Panc1 (cell line): ENCODE measurements at regions of chr2 and their contacts with region 1.

Region 1: DNA sequence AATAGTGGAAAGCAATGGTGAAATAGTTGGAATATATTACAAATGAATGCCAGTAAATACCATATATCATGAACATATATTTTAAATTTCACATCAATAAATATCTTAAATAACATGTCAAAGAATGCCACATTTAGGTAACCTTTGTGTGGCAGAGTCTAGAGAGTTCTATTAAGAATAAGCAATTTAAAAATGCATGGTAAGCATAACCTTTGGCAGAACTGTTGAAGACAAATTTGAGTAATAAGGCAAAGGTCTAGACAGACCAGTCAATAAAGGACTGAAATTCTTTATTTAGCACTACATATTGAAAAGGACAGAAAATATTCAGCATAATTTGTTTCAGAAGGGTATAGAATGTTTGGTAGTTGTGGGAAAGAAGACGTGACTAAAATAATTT is 1417.0 kb downstream of the SUCLG1 start:
- DNase-seq: no peak
- ATAC-seq: no peak
- H3K4me3 ChIP-seq: no peak overlapping the region
- H3K27ac ChIP-seq: no peak overlapping the region
- H3K4me1 ChIP-seq: no peaks in the 10 kb centered on the region
- H3K27me3 ChIP-seq: no peaks in the 10 kb centered on the region
- CTCF ChIP-seq: no peak

Region 2: GRCh38 chr2:82853299-82853698 is 188.8 kb before region 1 on chr2:
- CTCF ChIA-PET with region 1: no interaction called
- POLR2A ChIA-PET with region 1: no interaction called
- in situ Hi-C with region 1: no loop called
- intact Hi-C with region 1: no loop called
- DNase-seq: no peak
- ATAC-seq: no peak
- H3K4me3 ChIP-seq: no peak overlapping the region
- H3K27ac ChIP-seq: no peak overlapping the region
- H3K4me1 ChIP-seq: no peaks in the 10 kb centered on the region
- H3K27me3 ChIP-seq: no peaks in the 10 kb centered on the region
- CTCF ChIP-seq: no peak

Region 3: GRCh38 chr2:82993637-82994036 is 48.4 kb before region 1 on chr2:
- CTCF ChIA-PET with region 1: no interaction called
- POLR2A ChIA-PET with region 1: no interaction called
- in situ Hi-C with region 1: no loop called
- intact Hi-C with region 1: no loop called
- DNase-seq: peak; percentile 27
- ATAC-seq: no peak
- H3K4me3 ChIP-seq: no peak overlapping the region
- H3K27ac ChIP-seq: no peak overlapping the region
- H3K4me1 ChIP-seq: no peaks in the 10 kb centered on the region
- H3K27me3 ChIP-seq: no peaks in the 10 kb centered on the region
- CTCF ChIP-seq: no peak

Region 4: GRCh38 chr2:83081826-83082690 is 40.0 kb after region 1 on chr2:
- CTCF ChIA-PET with region 1: interaction called, 14 read pairs
- POLR2A ChIA-PET with region 1: no interaction called
- in situ Hi-C with region 1: no loop called
- intact Hi-C with region 1: no loop called
- DNase-seq: no peak
- ATAC-seq: no peak
- H3K4me3 ChIP-seq: no peak overlapping the region
- H3K27ac ChIP-seq: no peak overlapping the region
- H3K4me1 ChIP-seq: no peaks in the 10 kb centered on the region
- H3K27me3 ChIP-seq: no peaks in the 10 kb centered on the region
- CTCF ChIP-seq: no peak